AG04450 (cell line): ENCODE measurements at regions of chr17 and their contacts with region 1.

Region 1: GRCh38 chr17:42198897-42199296 is 4.6 kb upstream of the GHDC start:
- DNase-seq: no peak
- H3K4me3 ChIP-seq: no peak overlapping the region
- H3K27ac ChIP-seq: no peak overlapping the region
- H3K27me3 ChIP-seq: no peaks in the 10 kb centered on the region
- CTCF ChIP-seq: no peak

Region 2: GRCh38 chr17:42183741-42184711 is 14.9 kb before region 1 on chr17:
- CTCF ChIA-PET with region 1: interaction called, 6 read pairs
- POLR2A ChIA-PET with region 1: interaction called, 10 read pairs
- DNase-seq: peak; percentile 21
- H3K4me3 ChIP-seq: peak overlapping the region; percentile 63
- H3K27ac ChIP-seq: no peak overlapping the region
- H3K27me3 ChIP-seq: peaks cover 30% of the 10 kb centered on the region
- CTCF ChIP-seq: peak; percentile 65